Esophagus muscularis mucosa (tissue), 4 donors: ENCODE measurements at regions of chr6 and their contacts with region 1.

Region 1: GRCh38 chr6:116099036-116099435 is 1.6 kb upstream of the NT5DC1 start:
- DNase-seq: no peak
- H3K4me3 ChIP-seq: no peak overlapping the region
- H3K27ac ChIP-seq: no peak overlapping the region
- H3K4me1 ChIP-seq: peaks cover 22 to 42% (median 27%) of the 10 kb centered on the region in 4 donors
- H3K27me3 ChIP-seq: peaks cover 0 to 3% (median 0%) of the 10 kb centered on the region in 4 donors
- CTCF ChIP-seq: no peak
- EP300 ChIP-seq: no peak
- POLR2A ChIP-seq: no peak

Region 2: DNA sequence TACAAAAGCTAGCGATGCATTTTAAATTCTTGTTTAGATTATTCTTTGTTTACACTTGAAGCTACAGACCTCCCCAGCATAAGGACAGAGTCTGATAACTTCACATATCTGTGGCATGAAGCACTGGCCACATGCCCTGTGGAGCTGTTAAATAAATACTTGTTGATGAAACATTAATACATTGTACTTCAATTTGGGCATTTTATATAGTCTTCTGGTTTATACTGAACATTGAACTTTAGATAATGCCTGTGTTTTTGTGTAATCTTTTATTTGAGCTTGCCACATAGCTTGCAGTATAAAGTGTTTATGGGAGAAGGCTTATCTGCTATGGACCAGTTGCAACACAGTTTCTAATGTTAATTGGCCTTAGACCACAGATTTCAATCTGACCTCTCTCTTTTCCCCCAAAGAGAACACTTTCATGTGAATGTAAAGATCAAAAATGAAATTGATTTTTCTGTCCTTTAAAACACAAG is 86.5 kb before region 1 on chr6:
- intact Hi-C with region 1: loop called (anchors 2 kb)
- DNase-seq: no peak
- H3K4me3 ChIP-seq: no peak overlapping the region
- H3K27ac ChIP-seq: no peak overlapping the region
- H3K4me1 ChIP-seq: peaks cover 23 to 40% (median 28%) of the 10 kb centered on the region in 4 donors
- H3K27me3 ChIP-seq: no peaks in the 10 kb centered on the region
- CTCF ChIP-seq: no peak
- EP300 ChIP-seq: no peak
- POLR2A ChIP-seq: no peak